Activated CD8-positive, alpha-beta memory T cell treated with anti-CD3 and anti-CD28 coated beads, Interleukin-2, amount 10 ng/mL, durations not matched to agents 7 days and 5 days (primary cell): ENCODE measurements at regions of chr17 and their contacts with region 1.

Region 1: DNA sequence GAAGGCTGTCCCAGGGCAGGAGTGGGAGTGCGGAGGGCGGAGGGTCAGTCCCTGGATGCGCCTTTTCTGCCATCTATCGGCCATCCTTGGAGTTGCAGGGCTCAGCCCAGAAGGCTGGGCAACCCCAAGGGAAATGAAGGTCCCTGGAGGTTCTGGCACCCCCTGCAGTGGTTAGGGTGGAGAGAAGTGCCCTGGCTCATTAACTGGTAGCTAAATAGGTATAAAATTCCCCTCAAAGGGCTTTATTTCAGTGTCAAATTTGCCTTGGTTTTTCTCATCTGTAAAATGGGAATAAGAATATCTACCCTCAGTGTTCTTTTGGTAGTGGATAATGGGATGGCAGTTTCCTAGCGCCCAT is 22.4 kb downstream of the C17orf75 start:
- DNase-seq: peak; percentile 85
- ATAC-seq: peak; percentile 93
- H3K4me3 Mint-ChIP-seq: peak overlapping the region; percentile 56
- H3K27ac Mint-ChIP-seq: peak overlapping the region; percentile 20
- H3K4me1 Mint-ChIP-seq: peaks cover 29% of the 10 kb centered on the region
- H3K27me3 Mint-ChIP-seq: peaks cover 23% of the 10 kb centered on the region

Region 2: DNA sequence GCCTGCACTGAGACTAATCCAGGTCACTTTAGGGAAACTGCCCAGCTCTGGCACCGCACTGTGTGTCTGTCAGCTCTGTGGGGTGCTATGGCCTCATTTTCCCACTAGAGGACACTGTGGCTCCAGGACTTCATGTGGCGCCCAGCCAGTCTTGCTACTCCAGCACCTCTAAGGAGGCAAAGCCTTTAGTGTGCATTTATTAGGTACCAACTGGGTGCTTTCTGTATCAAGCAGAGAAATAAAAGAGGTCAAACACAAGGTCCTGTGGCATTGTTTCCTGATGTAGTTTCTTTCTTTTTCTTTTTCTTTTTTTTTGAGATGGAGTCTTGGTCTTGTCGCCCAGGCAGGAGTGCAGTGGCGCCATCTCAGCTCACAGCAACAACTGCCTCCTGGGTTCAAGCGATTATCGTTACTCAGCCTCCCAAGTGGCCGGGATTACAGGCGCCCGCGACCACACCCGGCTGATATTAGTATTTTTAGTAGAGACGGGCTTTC is 66.4 kb before region 1 on chr17:
- CTCF ChIA-PET with region 1: interaction called, 42 read pairs
- DNase-seq: peak; percentile 86
- ATAC-seq: peak; percentile 99
- H3K4me3 Mint-ChIP-seq: no peak overlapping the region
- H3K27ac Mint-ChIP-seq: no peak overlapping the region
- H3K4me1 Mint-ChIP-seq: no peaks in the 10 kb centered on the region
- H3K27me3 Mint-ChIP-seq: peaks cover 12% of the 10 kb centered on the region

Region 3: DNA sequence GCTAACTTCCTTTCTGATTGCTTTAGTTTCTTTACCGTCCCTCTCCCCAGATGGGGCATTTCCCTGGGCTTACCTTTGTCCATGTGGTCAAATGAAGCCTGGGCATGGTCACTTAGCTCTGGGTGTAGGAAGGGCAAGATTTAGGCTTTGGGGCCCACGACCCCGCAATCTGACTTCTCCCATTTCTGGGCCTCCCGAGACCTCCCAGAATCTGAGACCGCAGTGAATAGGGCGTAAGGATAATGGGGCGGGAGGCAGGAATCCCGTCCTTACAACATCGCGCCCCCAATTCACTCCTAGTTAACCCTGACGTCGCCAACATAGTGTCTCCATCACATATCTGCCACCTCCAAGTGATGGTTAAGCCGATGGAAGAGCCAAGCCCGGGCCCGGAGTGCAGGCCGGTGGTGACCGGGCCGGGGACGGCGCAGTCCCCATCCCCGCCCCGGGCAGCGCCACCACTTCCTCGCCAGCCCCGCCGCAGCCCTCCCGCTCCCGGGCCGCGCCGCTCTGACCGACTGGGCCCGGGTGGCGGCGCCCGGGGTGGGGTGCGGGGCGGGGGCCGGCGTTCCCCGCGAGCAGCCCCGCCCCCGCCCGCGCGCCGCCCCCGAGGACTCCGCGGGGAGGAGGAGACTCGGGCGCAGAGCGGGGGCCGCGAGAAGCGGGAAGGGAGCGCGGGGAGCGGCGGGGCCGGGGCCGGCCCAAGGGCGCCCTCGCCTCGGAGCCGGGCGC is 54.2 kb before region 1 on chr17 and contains the start of gene RHBDL3:
- CTCF ChIA-PET with region 1: interaction called, 11 read pairs
- DNase-seq: no peak
- ATAC-seq: peak; percentile 62
- H3K4me3 Mint-ChIP-seq: peak within 1 kb of the TSS; percentile 50
- H3K27ac Mint-ChIP-seq: no peak within 1 kb of the TSS
- H3K4me1 Mint-ChIP-seq: peaks cover 12% of the 10 kb centered on the region
- H3K27me3 Mint-ChIP-seq: peaks cover 78% of the 10 kb centered on the region
- total RNA-seq, gene RHBDL3: 0.29 to 0.54 TPM

Region 4: DNA sequence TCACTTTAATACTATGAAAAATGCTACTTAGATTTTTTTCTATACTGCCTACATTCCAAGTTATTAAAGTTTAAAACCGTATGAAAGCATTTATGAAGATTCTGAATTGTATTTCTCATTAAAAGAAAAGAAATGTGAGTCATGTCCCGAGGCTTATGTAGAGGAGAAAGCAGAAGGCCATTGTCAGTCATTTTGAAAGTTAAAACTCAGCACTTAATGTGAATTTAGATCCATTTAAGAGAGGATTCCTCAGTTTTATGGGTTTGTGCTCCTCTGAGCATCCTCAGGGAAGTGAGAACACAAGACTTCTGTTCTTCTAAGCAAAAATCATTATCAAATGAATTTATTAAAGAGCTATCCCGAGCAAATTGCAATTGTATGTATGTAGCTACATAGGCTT is 10.6 kb after region 1 on chr17:
- CTCF ChIA-PET with region 1: interaction called, 16 read pairs
- DNase-seq: no peak
- ATAC-seq: no peak
- H3K4me3 Mint-ChIP-seq: no peak overlapping the region
- H3K27ac Mint-ChIP-seq: peak overlapping the region; percentile 84
- H3K4me1 Mint-ChIP-seq: peaks cover 50% of the 10 kb centered on the region
- H3K27me3 Mint-ChIP-seq: no peaks in the 10 kb centered on the region

Region 5: GRCh38 chr17:32335687-32336086 is 16.2 kb after region 1 on chr17:
- CTCF ChIA-PET with region 1: interaction called, 15 read pairs
- DNase-seq: no peak
- ATAC-seq: no peak
- H3K4me3 Mint-ChIP-seq: no peak overlapping the region
- H3K27ac Mint-ChIP-seq: no peak overlapping the region
- H3K4me1 Mint-ChIP-seq: peaks cover 33% of the 10 kb centered on the region
- H3K27me3 Mint-ChIP-seq: no peaks in the 10 kb centered on the region

Region 6: GRCh38 chr17:32341141-32341856 is 21.8 kb after region 1 on chr17:
- CTCF ChIA-PET with region 1: interaction called, 12 read pairs
- DNase-seq: peak; percentile 78
- ATAC-seq: peak; percentile 38
- H3K4me3 Mint-ChIP-seq: peak overlapping the region; percentile 98
- H3K27ac Mint-ChIP-seq: peak overlapping the region; percentile 88
- H3K4me1 Mint-ChIP-seq: peaks cover 34% of the 10 kb centered on the region
- H3K27me3 Mint-ChIP-seq: no peaks in the 10 kb centered on the region